Ascending aorta (tissue), 2 donors: ENCODE measurements at regions of chr2 and their contacts with region 1.

Region 1: GRCh38 chr2:30208452-30208851 is 22.9 kb upstream of the LBH start:
- DNase-seq: peak in 1 of 2 donors; percentile 78
- H3K4me3 ChIP-seq: no peak overlapping the region
- H3K27ac ChIP-seq: no peak overlapping the region
- H3K4me1 ChIP-seq: no peaks in the 10 kb centered on the region
- H3K27me3 ChIP-seq: no peaks in the 10 kb centered on the region
- CTCF ChIP-seq: peak; percentile 87 to 91 (median 89)

Region 2: GRCh38 chr2:30252723-30253701 is 44.6 kb after region 1 on chr2:
- intact Hi-C with region 1: loop called (anchors 1 kb)
- DNase-seq: peak in 1 of 2 donors; percentile 90
- H3K4me3 ChIP-seq: peak overlapping the region in 1 of 2 donors; percentile 36
- H3K27ac ChIP-seq: peak overlapping the region; percentile 75 to 78
- H3K4me1 ChIP-seq: peaks cover 23 to 38% of the 10 kb centered on the region in 2 donors
- H3K27me3 ChIP-seq: no peaks in the 10 kb centered on the region
- CTCF ChIP-seq: no peak

Region 3: GRCh38 chr2:30475542-30475941 is 267.1 kb after region 1 on chr2:
- intact Hi-C with region 1: loop called (anchors 2 kb)
- DNase-seq: no peak
- H3K4me3 ChIP-seq: no peak overlapping the region
- H3K27ac ChIP-seq: no peak overlapping the region
- H3K4me1 ChIP-seq: peaks cover 0 to 4% of the 10 kb centered on the region in 2 donors
- H3K27me3 ChIP-seq: no peaks in the 10 kb centered on the region
- CTCF ChIP-seq: peak in 2 of 3 experiments; percentile 12 to 49

Region 4: DNA sequence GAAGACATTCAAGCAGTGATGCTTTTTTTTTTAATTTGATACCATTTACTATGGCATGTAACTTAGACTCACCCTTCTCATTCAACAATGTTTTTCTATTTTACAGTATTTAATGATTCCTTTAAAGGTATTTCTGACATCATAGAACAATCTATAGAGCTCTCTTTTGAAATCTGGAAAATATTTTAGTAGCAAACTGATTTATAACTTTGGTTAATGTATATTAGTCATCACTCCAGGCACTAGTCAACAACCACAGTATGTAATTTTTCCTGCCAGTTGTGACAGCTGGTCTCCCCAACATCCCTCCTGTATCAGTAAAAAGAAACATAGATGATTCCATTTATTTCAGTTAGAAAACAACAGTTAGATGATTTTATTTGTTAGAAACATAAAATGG is 361.5 kb after region 1 on chr2:
- intact Hi-C with region 1: no loop called
- DNase-seq: no peak
- H3K4me3 ChIP-seq: no peak overlapping the region
- H3K27ac ChIP-seq: no peak overlapping the region
- H3K4me1 ChIP-seq: peaks cover 0 to 10% of the 10 kb centered on the region in 2 donors
- H3K27me3 ChIP-seq: no peaks in the 10 kb centered on the region
- CTCF ChIP-seq: no peak